OCI-LY7 (cell line): ENCODE measurements at regions of chr6 and their contacts with region 1.

Region 1: DNA sequence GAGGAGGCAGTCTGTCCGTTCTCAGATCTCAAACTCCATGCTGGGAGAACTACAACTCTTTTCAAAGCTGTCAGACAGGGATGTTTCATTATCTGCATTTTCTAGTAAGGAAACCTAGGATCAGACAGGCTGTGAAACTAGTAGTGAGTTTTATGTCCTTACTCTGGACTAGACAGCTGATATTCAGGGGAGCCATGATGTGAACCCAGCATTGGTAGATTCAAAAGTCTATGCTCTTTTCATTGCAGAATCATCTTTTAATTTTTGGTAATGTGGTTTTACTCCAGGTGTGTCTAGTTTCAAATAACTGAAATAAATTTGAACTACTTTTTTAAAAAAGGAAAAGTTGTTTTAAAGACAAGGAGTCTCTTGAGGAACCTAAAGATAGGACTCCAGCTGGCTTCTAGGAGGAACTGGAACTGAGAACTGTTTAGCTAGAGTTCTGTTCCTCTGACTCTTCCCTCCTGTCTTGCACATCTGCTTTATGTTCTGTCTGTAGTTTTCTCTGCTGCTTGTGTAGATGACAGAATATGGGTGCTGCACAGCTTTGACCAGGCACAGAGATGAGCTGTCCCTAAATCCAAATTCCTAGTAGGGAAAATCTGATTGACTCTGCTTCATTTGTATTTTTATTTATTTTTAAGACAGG is 27.8 kb upstream of the RNF144B start:
- DNase-seq: peak; percentile 97
- H3K4me3 ChIP-seq: peak overlapping the region; percentile 53
- H3K27ac ChIP-seq: peak overlapping the region; percentile 100
- H3K4me1 ChIP-seq: peaks cover 58% of the 10 kb centered on the region
- CTCF ChIP-seq: 0 out of 2 replicates have a peak, but pooled peaks have one; percentile 12

Region 2: GRCh38 chr6:17145162-17145561 is 1214.2 kb before region 1 on chr6:
- CTCF ChIA-PET with region 1: no interaction called
- POLR2A ChIA-PET with region 1: no interaction called
- intact Hi-C with region 1: no loop called
- DNase-seq: no peak
- H3K4me3 ChIP-seq: no peak overlapping the region
- H3K27ac ChIP-seq: no peak overlapping the region
- H3K4me1 ChIP-seq: no peaks in the 10 kb centered on the region
- CTCF ChIP-seq: no peak

Region 3: DNA sequence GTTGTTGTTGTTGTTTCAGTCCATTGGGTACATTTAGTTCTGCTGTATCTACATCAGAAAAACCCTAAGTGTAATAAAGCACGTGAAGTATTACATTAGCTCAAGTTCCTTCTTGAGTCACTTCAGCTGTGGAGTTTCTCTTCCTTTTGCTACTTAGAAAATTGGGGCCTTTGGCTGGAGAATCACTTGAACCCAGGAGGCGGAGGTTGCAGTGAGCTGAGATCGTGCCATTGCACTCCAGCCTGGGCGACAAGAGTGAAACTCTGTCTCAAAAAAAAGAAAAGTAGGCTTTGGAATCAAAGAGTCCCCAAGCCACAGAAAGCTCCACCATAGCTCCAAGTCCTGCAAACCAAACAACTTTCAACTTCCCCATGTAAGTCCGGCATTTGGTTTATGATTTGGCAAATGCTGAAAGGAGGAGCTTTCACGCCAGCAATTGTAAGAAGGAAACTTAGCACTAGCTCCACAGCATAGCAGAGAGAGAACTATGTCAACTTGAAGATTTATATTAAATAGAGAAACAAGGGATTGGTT is 28.7 kb before region 1 on chr6:
- CTCF ChIA-PET with region 1: interaction called, 9 read pairs
- POLR2A ChIA-PET with region 1: interaction called, 133 read pairs
- intact Hi-C with region 1: loop called (anchors 1 kb)
- DNase-seq: peak; percentile 70
- H3K4me3 ChIP-seq: peak overlapping the region; percentile 50
- H3K27ac ChIP-seq: peak overlapping the region; percentile 92
- H3K4me1 ChIP-seq: peaks cover 62% of the 10 kb centered on the region
- CTCF ChIP-seq: no peak

Region 4: DNA sequence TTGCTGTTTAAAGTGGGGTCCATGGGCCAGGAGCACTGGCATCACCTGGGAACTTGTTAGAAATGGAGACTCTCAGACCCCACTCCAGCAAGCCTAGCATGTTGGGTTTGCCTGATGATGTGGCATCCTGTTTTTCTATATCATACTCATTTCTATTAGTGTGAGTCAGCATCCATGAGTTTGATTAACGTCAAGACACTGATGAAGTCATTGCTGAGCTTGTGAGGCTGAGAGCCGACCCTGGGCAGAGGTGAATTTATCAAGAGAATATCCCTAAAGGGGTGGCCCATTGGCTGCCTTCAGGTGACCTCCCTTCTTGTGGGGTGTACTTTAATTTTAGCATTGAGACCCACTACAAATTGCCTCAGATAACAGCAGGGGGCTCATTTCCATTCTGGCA is 15.6 kb before region 1 on chr6:
- CTCF ChIA-PET with region 1: interaction called, 12 read pairs
- POLR2A ChIA-PET with region 1: interaction called, 69 read pairs
- intact Hi-C with region 1: loop called (anchors 1 kb)
- DNase-seq: no peak
- H3K4me3 ChIP-seq: peak overlapping the region; percentile 26
- H3K27ac ChIP-seq: peak overlapping the region; percentile 89
- H3K4me1 ChIP-seq: peaks cover 72% of the 10 kb centered on the region
- CTCF ChIP-seq: peak; percentile 44; the same call in 1 of the 2 replicates

Region 5: GRCh38 chr6:18380158-18380836 is 20.9 kb after region 1 on chr6:
- CTCF ChIA-PET with region 1: interaction called, 6 read pairs
- POLR2A ChIA-PET with region 1: interaction called, 28 read pairs
- intact Hi-C with region 1: loop called (anchors 1 kb)
- DNase-seq: peak; percentile 44
- H3K4me3 ChIP-seq: peak overlapping the region; percentile 65
- H3K27ac ChIP-seq: peak overlapping the region; percentile 66
- H3K4me1 ChIP-seq: peaks cover 62% of the 10 kb centered on the region
- CTCF ChIP-seq: no peak

Region 6: GRCh38 chr6:18392346-18392884 is 33.1 kb after region 1 on chr6:
- CTCF ChIA-PET with region 1: interaction called, 12 read pairs
- POLR2A ChIA-PET with region 1: interaction called, 160 read pairs
- intact Hi-C with region 1: loop called (anchors 1 kb)
- DNase-seq: peak; percentile 51
- H3K4me3 ChIP-seq: peak overlapping the region; percentile 48
- H3K27ac ChIP-seq: peak overlapping the region; percentile 58
- H3K4me1 ChIP-seq: peaks cover 63% of the 10 kb centered on the region
- CTCF ChIP-seq: peak; percentile 75

Region 7: DNA sequence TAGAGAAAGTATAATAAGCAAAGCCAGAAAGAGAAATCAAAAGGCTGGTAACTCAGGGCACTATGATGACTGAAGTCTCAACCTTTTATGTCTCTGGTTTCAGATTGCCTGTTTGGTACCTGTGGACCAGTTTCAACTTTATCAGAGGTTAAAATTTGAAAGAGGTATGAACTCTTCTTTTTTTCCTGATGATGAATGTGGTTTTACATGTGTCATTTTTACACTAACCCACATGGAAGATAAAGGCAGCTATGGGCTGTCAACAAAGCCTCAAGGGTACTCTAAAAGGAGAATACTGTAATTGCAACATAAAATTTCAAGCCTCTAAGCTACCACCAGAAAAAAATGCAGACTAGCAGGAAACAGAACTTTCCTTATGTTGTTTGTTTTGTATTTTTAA is 80.2 kb after region 1 on chr6:
- CTCF ChIA-PET with region 1: no interaction called
- POLR2A ChIA-PET with region 1: no interaction called
- intact Hi-C with region 1: no loop called
- DNase-seq: no peak
- H3K4me3 ChIP-seq: no peak overlapping the region
- H3K27ac ChIP-seq: no peak overlapping the region
- H3K4me1 ChIP-seq: peaks cover 29% of the 10 kb centered on the region
- CTCF ChIP-seq: no peak

Region 8: GRCh38 chr6:19836799-19837510 is 1477.6 kb after region 1 on chr6 and contains the start of gene ID4:
- CTCF ChIA-PET with region 1: no interaction called
- POLR2A ChIA-PET with region 1: no interaction called
- intact Hi-C with region 1: loop called (anchors 10 kb)
- DNase-seq: no peak
- H3K4me3 ChIP-seq: peak within 1 kb of the TSS; percentile 80
- H3K27ac ChIP-seq: peak within 1 kb of the TSS; percentile 96
- H3K4me1 ChIP-seq: peaks cover 41% of the 10 kb centered on the region
- CTCF ChIP-seq: no peak
- total RNA-seq, gene ID4: 2.0 and 2.1 TPM in 2 replicates